BJ (cell line): ENCODE measurements at regions of chr4 and their contacts with region 1.

Region 1: GRCh38 chr4:88341227-88342192 is 37.1 kb upstream of the HERC6 start:
- DNase-seq: peak; percentile 60
- H3K4me3 ChIP-seq: no peak overlapping the region
- H3K27me3 ChIP-seq: no peaks in the 10 kb centered on the region
- CTCF ChIP-seq: no peak

Region 2: GRCh38 chr4:88196013-88196365 is 145.5 kb before region 1 on chr4:
- CTCF ChIA-PET with region 1: no interaction called
- POLR2A ChIA-PET with region 1: no interaction called
- DNase-seq: no peak
- H3K4me3 ChIP-seq: no peak overlapping the region
- H3K27me3 ChIP-seq: no peaks in the 10 kb centered on the region
- CTCF ChIP-seq: no peak

Region 3: GRCh38 chr4:88308587-88308986 is 32.9 kb before region 1 on chr4:
- CTCF ChIA-PET with region 1: no interaction called
- POLR2A ChIA-PET with region 1: no interaction called
- DNase-seq: no peak
- H3K4me3 ChIP-seq: no peak overlapping the region
- H3K27me3 ChIP-seq: no peaks in the 10 kb centered on the region
- CTCF ChIP-seq: no peak

Region 4: DNA sequence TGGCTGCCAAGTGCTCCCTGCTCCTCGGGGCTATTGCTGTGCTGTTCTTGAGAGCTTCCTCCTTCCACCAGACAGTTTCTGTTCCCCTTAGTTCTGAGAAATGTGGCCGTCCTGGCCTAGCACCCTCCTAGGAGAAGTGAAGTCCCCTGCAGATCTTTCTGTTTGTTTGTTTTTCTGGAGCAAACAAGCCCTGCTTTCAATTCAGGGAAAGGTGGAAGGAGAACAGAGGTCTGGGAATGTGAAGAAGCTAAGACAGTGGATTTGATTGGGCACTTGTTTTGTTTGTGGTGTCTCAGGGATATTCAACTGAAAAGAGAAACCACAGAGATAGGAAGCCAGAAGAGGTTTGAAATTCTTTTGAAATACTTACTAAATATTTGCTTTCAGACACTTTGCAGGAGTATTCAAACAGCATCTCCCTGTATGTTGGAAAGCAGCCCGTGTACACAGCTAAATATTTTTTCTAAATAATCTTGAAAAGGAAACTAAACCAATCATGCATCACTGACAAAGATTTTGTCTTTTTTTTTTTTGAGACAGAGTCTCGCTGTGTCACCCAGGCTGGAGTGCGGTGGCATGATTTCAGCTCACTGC is 20.6 kb before region 1 on chr4:
- CTCF ChIA-PET with region 1: no interaction called
- POLR2A ChIA-PET with region 1: no interaction called
- DNase-seq: peak; percentile 5
- H3K4me3 ChIP-seq: no peak overlapping the region
- H3K27me3 ChIP-seq: no peaks in the 10 kb centered on the region; the same call in 1 of the 2 replicates
- CTCF ChIP-seq: no peak

Region 5: DNA sequence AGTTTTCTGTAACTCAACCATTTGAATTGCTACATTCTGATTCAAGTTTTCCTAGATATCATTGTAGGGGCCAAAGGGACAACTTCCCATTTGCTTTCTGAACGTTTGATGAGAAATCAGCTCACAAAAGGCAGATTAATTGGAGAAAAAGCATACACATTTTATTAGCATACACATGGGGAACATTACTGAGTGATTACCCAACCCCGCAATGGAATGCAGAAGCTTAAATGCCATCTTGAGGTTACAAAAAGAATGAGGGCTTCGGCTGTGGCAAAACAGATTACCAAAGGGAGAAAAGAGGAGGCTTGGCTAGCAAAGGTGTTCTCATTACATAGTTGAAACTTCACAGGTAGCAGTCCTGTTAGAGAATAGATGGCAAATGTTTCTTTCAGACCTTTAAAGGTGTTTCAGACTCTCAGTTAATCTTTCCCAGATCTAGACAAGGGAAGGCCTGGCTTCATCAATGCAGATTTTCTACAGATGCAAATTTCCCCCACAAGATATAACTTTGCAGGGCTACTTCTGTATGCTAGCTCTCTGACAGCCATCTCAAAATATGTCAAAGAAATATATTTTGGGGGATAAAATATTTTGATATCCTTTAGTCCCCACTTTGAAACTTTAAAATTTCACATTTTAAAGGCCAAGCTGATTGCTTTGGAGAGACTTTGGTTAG is 10.7 kb after region 1 on chr4:
- CTCF ChIA-PET with region 1: interaction called, 13 read pairs
- POLR2A ChIA-PET with region 1: no interaction called
- DNase-seq: peak; percentile 60
- H3K4me3 ChIP-seq: no peak overlapping the region
- H3K27me3 ChIP-seq: no peaks in the 10 kb centered on the region
- CTCF ChIP-seq: no peak